ENCODE measurements at regions of chr4 and their contacts with region 1.

Region 1: GRCh38 chr4:54322818-54323417 is 93.8 kb downstream of the PDGFRA start:
- DNase-seq: peak in 8 of 9 donors; percentile 8 to 52 (median 42)
- ATAC-seq: peak; percentile 54
- H3K4me3 ChIP-seq: no peak overlapping the region
- H3K4me3 Mint-ChIP-seq: no peak overlapping the region
- H3K27ac ChIP-seq: no peak overlapping the region
- H3K27ac Mint-ChIP-seq: no peak overlapping the region
- H3K4me1 ChIP-seq: no peaks in the 10 kb centered on the region
- H3K4me1 Mint-ChIP-seq: peaks cover 0 to 12% (median 0%) of the 10 kb centered on the region in 7 donors
- H3K27me3 ChIP-seq: no peaks in the 10 kb centered on the region
- H3K27me3 Mint-ChIP-seq: peaks cover 0 to 3% (median 0%) of the 10 kb centered on the region in 5 donors

Region 2: DNA sequence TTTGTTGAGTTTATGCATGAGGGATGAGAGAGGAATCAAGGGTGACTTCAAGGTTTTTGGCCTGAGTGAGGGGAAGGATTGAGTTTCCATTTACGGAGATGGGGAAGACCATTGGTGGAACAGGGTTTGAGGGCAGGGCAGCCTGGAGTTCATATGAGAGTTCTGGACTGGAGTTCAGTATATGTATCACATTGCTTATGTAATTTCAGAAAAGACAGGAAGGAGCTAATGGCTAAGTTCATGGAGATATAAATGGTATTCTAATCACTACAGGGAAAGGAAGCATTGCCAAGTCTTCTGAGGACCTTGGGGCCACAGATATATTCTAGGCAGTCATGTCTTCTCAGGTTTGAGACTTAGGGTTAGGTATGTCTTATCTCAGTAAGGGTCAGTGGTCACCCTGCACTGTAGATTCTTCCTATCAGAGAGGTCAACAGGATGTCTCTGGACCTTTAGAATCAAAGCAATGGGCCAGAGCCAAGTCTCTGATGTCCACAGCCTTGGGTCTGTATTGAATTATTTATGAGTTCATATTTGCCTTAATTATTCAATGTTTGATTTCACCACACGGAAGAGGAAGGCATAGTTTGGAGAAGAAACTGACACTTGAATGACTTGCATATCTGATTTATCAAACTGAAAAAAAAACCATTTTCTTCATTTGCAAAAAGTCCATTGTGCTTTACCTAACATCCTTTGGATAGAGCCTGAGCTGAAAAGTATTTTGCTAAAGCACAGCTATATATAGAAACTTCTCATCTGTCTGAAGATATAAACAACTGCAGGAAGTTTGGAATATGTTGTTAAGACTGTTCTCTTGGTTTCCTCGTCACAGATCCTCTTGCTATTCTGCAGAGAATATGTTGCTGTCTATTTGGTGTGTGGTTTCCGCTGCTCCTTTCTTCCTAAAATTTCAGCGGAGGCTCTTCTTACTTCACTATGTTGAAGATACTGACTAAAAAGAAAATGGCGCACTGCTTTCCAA is 45.7 kb after region 1 on chr4:
- CTCF ChIA-PET with region 1: no interaction called
- POLR2A ChIA-PET with region 1: no interaction called
- intact Hi-C with region 1: no loop called
- DNase-seq: no peak
- ATAC-seq: no peak
- H3K4me3 ChIP-seq: no peak overlapping the region
- H3K4me3 Mint-ChIP-seq: no peak overlapping the region
- H3K27ac ChIP-seq: no peak overlapping the region
- H3K27ac Mint-ChIP-seq: no peak overlapping the region
- H3K4me1 ChIP-seq: no peaks in the 10 kb centered on the region
- H3K4me1 Mint-ChIP-seq: peaks cover 0 to 3% (median 0%) of the 10 kb centered on the region in 7 donors
- H3K27me3 ChIP-seq: no peaks in the 10 kb centered on the region
- H3K27me3 Mint-ChIP-seq: peaks cover 0 to 26% (median 18%) of the 10 kb centered on the region in 5 donors

Region 3: GRCh38 chr4:54440394-54441136 is 117.6 kb after region 1 on chr4:
- CTCF ChIA-PET with region 1: no interaction called
- POLR2A ChIA-PET with region 1: no interaction called
- intact Hi-C with region 1: loop called (anchors 1 kb)
- DNase-seq: no peak
- ATAC-seq: no peak
- H3K4me3 ChIP-seq: no peak overlapping the region
- H3K4me3 Mint-ChIP-seq: peak overlapping the region in 2 of 10 donors; percentile 19 to 30
- H3K27ac ChIP-seq: no peak overlapping the region
- H3K27ac Mint-ChIP-seq: no peak overlapping the region
- H3K4me1 ChIP-seq: no peaks in the 10 kb centered on the region
- H3K4me1 Mint-ChIP-seq: no peaks in the 10 kb centered on the region
- H3K27me3 ChIP-seq: no peaks in the 10 kb centered on the region
- H3K27me3 Mint-ChIP-seq: peaks cover 16 to 38% (median 26%) of the 10 kb centered on the region in 5 donors

Region 4: DNA sequence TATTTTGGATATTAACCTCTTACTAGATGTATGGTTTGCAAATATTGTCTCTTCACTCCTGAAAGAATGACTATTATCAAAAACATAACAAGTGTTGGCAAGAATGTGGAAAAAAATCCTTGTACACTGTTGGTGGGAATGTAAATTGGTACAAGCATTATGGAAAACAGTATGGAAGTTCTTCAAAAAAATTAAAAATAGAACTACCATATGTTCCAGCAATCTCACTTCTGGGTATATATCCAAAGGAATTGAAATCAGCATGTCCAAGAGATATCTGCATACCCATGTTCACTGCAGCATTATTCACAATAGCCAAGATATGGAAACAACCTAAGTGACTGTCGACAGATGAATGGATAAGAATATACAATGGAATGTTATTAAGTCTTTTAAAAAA is 273.3 kb after region 1 on chr4:
- CTCF ChIA-PET with region 1: no interaction called
- POLR2A ChIA-PET with region 1: no interaction called
- intact Hi-C with region 1: no loop called
- DNase-seq: no peak
- ATAC-seq: no peak
- H3K4me3 ChIP-seq: no peak overlapping the region
- H3K4me3 Mint-ChIP-seq: no peak overlapping the region
- H3K27ac ChIP-seq: no peak overlapping the region
- H3K27ac Mint-ChIP-seq: no peak overlapping the region
- H3K4me1 ChIP-seq: no peaks in the 10 kb centered on the region
- H3K4me1 Mint-ChIP-seq: no peaks in the 10 kb centered on the region
- H3K27me3 ChIP-seq: no peaks in the 10 kb centered on the region
- H3K27me3 Mint-ChIP-seq: peaks cover 0 to 9% (median 2%) of the 10 kb centered on the region in 5 donors

Region 5: DNA sequence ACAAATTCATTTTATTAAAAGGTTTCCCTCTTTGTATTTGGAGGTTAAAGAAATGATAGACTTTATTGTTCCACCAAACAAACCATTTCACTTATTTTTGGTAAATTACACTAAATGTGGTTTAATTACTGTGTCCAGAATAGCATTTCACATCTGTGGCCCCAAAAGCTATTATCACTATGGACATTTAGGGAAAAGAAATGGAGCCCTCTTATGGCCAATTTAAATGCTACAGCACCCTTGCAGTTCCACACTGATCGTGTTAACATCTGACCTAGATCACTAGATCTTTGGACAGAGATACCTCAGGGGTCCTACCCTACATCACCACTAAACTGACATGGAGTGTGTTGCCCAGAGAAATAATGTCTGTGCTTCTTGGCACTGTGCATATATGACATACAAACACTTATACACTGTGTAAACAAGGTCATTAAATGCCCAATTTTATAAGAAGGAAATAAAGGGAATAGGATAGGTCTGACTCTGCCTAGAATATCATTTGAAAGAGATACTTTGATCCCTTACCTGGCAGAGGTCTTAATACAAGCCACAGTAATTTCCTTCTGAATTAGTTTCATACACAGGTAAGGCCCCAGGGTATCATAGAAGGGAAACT is 638.5 kb after region 1 on chr4:
- CTCF ChIA-PET with region 1: interaction called, 6 read pairs
- POLR2A ChIA-PET with region 1: no interaction called
- intact Hi-C with region 1: loop called (anchors 1 to 2 kb)
- DNase-seq: peak in 4 of 9 donors; percentile 29 to 48 (median 40)
- ATAC-seq: peak; percentile 46
- H3K4me3 ChIP-seq: no peak overlapping the region
- H3K4me3 Mint-ChIP-seq: no peak overlapping the region
- H3K27ac ChIP-seq: no peak overlapping the region
- H3K27ac Mint-ChIP-seq: peak overlapping the region in 2 of 9 donors; percentile 61 to 62
- H3K4me1 ChIP-seq: peaks cover 0 to 8% of the 10 kb centered on the region in 2 donors
- H3K4me1 Mint-ChIP-seq: peaks cover 5 to 37% (median 11%) of the 10 kb centered on the region in 7 donors
- H3K27me3 ChIP-seq: no peaks in the 10 kb centered on the region
- H3K27me3 Mint-ChIP-seq: peaks cover 0 to 3% (median 0%) of the 10 kb centered on the region in 5 donors

Region 6: GRCh38 chr4:55321707-55322264 is 998.9 kb after region 1 on chr4:
- CTCF ChIA-PET with region 1: no interaction called
- POLR2A ChIA-PET with region 1: interaction called, 3 read pairs
- intact Hi-C with region 1: loop called (anchors 1 to 5 kb)
- DNase-seq: peak in 6 of 9 donors; percentile 9 to 42 (median 18)
- ATAC-seq: no peak
- H3K4me3 ChIP-seq: no peak overlapping the region
- H3K4me3 Mint-ChIP-seq: no peak overlapping the region
- H3K27ac ChIP-seq: no peak overlapping the region
- H3K27ac Mint-ChIP-seq: no peak overlapping the region
- H3K4me1 ChIP-seq: peaks cover 0 to 7% of the 10 kb centered on the region in 2 donors
- H3K4me1 Mint-ChIP-seq: peaks cover 12 to 30% (median 22%) of the 10 kb centered on the region in 7 donors
- H3K27me3 ChIP-seq: no peaks in the 10 kb centered on the region
- H3K27me3 Mint-ChIP-seq: no peaks in the 10 kb centered on the region

Measured in naive thymus-derived CD4-positive, alpha-beta T cell (primary cell).